Prostate gland (tissue), 2 donors: ENCODE measurements at regions of chr17 and their contacts with region 1.

Region 1: GRCh38 chr17:57849874-57850754 is at the start of gene MRPS23:
- DNase-seq: peak; percentile 98
- H3K4me3 ChIP-seq: peak within 1 kb of the TSS; percentile 61 to 75
- H3K27ac ChIP-seq: peak within 1 kb of the TSS; percentile 88 to 92
- H3K4me1 ChIP-seq: peaks cover 17% of the 10 kb centered on the region
- H3K27me3 ChIP-seq: no peaks in the 10 kb centered on the region
- CTCF ChIP-seq: peak in 1 of 4 experiments; percentile 26
- POLR2A ChIP-seq: peak; percentile 77
- total RNA-seq, gene MRPS23: 29.0 to 43.1 TPM

Region 2: DNA sequence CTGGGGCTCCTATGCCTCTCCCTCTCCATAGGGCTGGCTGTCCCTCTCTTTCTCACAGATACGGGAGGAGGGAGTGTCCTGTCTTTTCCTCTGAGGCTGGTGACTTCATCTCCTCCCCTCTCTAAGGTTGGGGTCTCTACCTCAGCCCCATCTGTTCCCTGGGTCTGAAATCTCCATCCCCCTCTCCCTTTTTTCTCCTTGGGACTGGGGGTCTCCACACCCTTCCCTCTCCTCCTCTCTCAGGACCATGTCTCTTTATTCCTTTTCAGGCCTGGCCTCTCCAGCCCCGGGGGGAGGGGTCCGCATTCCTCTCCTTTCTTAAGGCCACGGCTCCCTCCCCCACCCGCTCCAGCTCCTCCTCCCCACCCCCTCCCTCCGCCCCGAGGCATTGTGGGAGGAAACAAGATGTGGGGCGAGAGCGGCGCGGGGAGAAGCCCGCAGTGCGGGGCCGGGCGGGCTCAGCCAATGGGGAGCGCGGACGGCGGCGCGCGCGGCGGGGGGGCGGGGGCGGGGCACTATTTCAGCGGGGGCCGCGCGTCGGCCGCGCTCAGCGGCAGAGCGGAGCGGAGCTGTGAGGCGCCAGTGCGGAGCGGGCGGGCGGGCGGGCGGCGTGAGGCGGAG is 232.9 kb after region 1 on chr17 and contains the start of gene DYNLL2:
- intact Hi-C with region 1: loop called (anchors 10 kb)
- DNase-seq: peak; percentile 86
- H3K4me3 ChIP-seq: peak within 1 kb of the TSS; percentile 99
- H3K27ac ChIP-seq: peak within 1 kb of the TSS; percentile 90 to 91
- H3K4me1 ChIP-seq: peaks cover 21% of the 10 kb centered on the region
- H3K27me3 ChIP-seq: no peaks in the 10 kb centered on the region
- CTCF ChIP-seq: no peak
- POLR2A ChIP-seq: no peak
- total RNA-seq, gene DYNLL2: 29.9 to 33.0 TPM